Caco-2 (cell line): ENCODE measurements at regions of chr5 and their contacts with region 1.

Region 1: DNA sequence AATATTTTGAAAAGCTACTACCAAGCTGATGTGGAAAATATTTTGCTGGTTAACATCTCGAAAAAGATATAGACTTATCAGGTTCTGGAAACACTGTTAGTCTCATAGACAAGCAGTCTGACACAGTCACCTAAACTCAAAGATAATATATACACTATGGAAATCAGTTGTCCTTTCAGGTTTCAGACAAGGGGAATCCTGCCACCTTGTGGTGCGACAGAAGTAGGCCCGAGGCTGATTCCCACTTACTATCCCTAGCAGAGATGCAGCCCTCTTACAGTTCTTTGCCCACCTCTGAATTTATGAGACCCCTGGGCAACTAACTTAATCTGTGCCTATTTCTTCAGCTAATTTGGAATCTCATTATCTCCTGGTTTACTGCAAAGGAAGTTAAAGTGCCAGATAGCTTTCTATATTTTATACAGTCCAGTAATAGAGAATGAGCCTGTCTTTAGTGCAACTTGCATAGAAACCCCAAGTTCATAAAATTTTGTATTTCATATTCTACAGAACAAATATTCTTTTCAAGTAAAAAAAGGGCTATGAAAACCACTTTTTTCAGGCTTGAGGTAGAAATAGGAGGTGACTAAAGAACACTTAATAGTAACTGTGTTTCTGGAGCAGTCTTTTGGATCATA is 16.9 kb downstream of the RAD1 start:
- DNase-seq: peak; percentile 68 to 75
- H3K4me3 ChIP-seq: no peak overlapping the region
- H3K4me3 Mint-ChIP-seq: no peak overlapping the region
- H3K27ac Mint-ChIP-seq: peak overlapping the region; percentile 45
- H3K4me1 ChIP-seq: peaks cover 15% of the 10 kb centered on the region; the same call in 1 of the 2 replicates
- H3K4me1 Mint-ChIP-seq: no peaks in the 10 kb centered on the region
- H3K27me3 ChIP-seq: no peaks in the 10 kb centered on the region
- H3K27me3 Mint-ChIP-seq: no peaks in the 10 kb centered on the region
- CTCF ChIP-seq: peak; percentile 85 to 93

Region 2: GRCh38 chr5:34822956-34823715 is 75.2 kb before region 1 on chr5:
- CTCF ChIA-PET with region 1: no interaction called
- POLR2A ChIA-PET with region 1: no interaction called
- intact Hi-C with region 1: loop called (anchors 5 kb)
- DNase-seq: peak in 1 of 2 experiments; percentile 33
- H3K4me3 ChIP-seq: no peak overlapping the region
- H3K4me3 Mint-ChIP-seq: no peak overlapping the region
- H3K27ac Mint-ChIP-seq: no peak overlapping the region
- H3K4me1 ChIP-seq: peaks cover 14% of the 10 kb centered on the region; the same call in 1 of the 2 replicates
- H3K4me1 Mint-ChIP-seq: peaks cover 15% of the 10 kb centered on the region
- H3K27me3 ChIP-seq: no peaks in the 10 kb centered on the region
- H3K27me3 Mint-ChIP-seq: no peaks in the 10 kb centered on the region
- CTCF ChIP-seq: no peak

Region 3: GRCh38 chr5:34854459-34855174 is 43.8 kb before region 1 on chr5:
- CTCF ChIA-PET with region 1: no interaction called
- POLR2A ChIA-PET with region 1: no interaction called
- intact Hi-C with region 1: no loop called
- DNase-seq: no peak
- H3K4me3 ChIP-seq: no peak overlapping the region
- H3K4me3 Mint-ChIP-seq: no peak overlapping the region
- H3K27ac Mint-ChIP-seq: no peak overlapping the region
- H3K4me1 ChIP-seq: peaks cover 15% of the 10 kb centered on the region
- H3K4me1 Mint-ChIP-seq: peaks cover 5% of the 10 kb centered on the region
- H3K27me3 ChIP-seq: no peaks in the 10 kb centered on the region
- H3K27me3 Mint-ChIP-seq: no peaks in the 10 kb centered on the region
- CTCF ChIP-seq: no peak

Region 4: GRCh38 chr5:35046774-35047173 is 148.4 kb after region 1 on chr5:
- CTCF ChIA-PET with region 1: no interaction called
- POLR2A ChIA-PET with region 1: no interaction called
- intact Hi-C with region 1: no loop called
- DNase-seq: no peak
- H3K4me3 ChIP-seq: no peak overlapping the region
- H3K4me3 Mint-ChIP-seq: no peak overlapping the region
- H3K27ac Mint-ChIP-seq: no peak overlapping the region
- H3K4me1 ChIP-seq: peaks cover 17% of the 10 kb centered on the region
- H3K4me1 Mint-ChIP-seq: peaks cover 23% of the 10 kb centered on the region
- H3K27me3 ChIP-seq: no peaks in the 10 kb centered on the region
- H3K27me3 Mint-ChIP-seq: no peaks in the 10 kb centered on the region
- CTCF ChIP-seq: no peak